ENCODE measurements at regions of chr2 and their contacts with region 1.

Region 1: GRCh38 chr2:203177361-203177760 is 61.5 kb upstream of the CYP20A1 start:
- DNase-seq: no peak
- H3K4me3 ChIP-seq: no peak overlapping the region
- H3K27ac ChIP-seq: no peak overlapping the region
- H3K4me1 ChIP-seq: no peaks in the 10 kb centered on the region
- H3K27me3 ChIP-seq: no peaks in the 10 kb centered on the region
- CTCF ChIP-seq: no peak
- EP300 ChIP-seq: no peak
- POLR2A ChIP-seq: no peak

Region 2: GRCh38 chr2:203155406-203155805 is 22.0 kb before region 1 on chr2:
- in situ Hi-C with region 1: no loop called
- intact Hi-C with region 1: loop called (anchors 1 kb)
- DNase-seq: no peak
- H3K4me3 ChIP-seq: no peak overlapping the region
- H3K27ac ChIP-seq: no peak overlapping the region
- H3K4me1 ChIP-seq: peaks cover 0 to 5% (median 0%) of the 10 kb centered on the region in 4 donors
- H3K27me3 ChIP-seq: no peaks in the 10 kb centered on the region
- CTCF ChIP-seq: no peak
- EP300 ChIP-seq: no peak
- POLR2A ChIP-seq: no peak

Region 3: GRCh38 chr2:203400816-203401585 is 223.6 kb after region 1 on chr2:
- in situ Hi-C with region 1: no loop called
- intact Hi-C with region 1: no loop called
- DNase-seq: no peak
- H3K4me3 ChIP-seq: no peak overlapping the region
- H3K27ac ChIP-seq: no peak overlapping the region
- H3K4me1 ChIP-seq: peaks cover 0 to 6% (median 0%) of the 10 kb centered on the region in 4 donors
- H3K27me3 ChIP-seq: no peaks in the 10 kb centered on the region
- CTCF ChIP-seq: no peak
- EP300 ChIP-seq: no peak
- POLR2A ChIP-seq: no peak

Measured in transverse colon (tissue), 4 donors.